Activated naive CD4-positive, alpha-beta T cell treated with anti-CD3 and anti-CD28 coated beads for 36 hours (primary cell): ENCODE measurements at regions of chr3 and their contacts with region 1.

Region 1: DNA sequence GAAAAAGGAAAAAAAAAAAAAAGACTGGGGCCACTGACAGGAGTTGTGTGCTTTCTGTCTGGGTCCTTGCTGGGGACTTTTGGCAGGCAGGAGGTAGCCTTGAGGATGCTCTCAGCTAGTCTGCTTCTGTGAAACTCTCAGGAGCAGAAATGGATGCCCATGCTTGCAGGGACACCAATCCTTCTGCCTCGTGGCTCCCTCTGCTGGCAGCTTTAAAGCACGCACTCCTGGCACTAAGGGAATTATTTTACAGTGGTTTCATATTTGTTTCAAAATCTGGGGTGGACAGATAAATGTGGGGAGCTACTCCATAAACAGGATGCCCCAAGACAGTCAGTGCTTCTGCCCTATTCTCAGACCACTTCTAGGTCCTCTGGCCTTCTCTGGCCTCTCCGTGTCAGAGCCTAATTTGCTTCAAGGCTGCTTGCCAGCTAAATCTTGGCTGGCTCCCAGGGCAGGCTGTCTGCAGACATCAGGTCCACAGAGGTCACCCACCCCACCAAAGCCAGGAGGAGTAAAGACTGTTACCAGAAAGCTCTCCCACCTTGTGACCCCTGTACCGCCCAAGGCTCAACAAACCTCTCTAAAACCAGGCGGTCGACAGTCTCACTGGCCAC is 17.1 kb downstream of the TRAIP start:
- DNase-seq: peak; percentile 89
- H3K4me3 Mint-ChIP-seq: no peak overlapping the region
- H3K27ac Mint-ChIP-seq: no peak overlapping the region
- H3K4me1 Mint-ChIP-seq: no peaks in the 10 kb centered on the region
- H3K27me3 Mint-ChIP-seq: no peaks in the 10 kb centered on the region

Region 2: GRCh38 chr3:49387721-49388120 is 451.6 kb before region 1 on chr3:
- CTCF ChIA-PET with region 1: no interaction called
- intact Hi-C with region 1: no loop called
- DNase-seq: no peak
- H3K4me3 Mint-ChIP-seq: no peak overlapping the region
- H3K27ac Mint-ChIP-seq: peak overlapping the region; percentile 50
- H3K4me1 Mint-ChIP-seq: peaks cover 50% of the 10 kb centered on the region
- H3K27me3 Mint-ChIP-seq: no peaks in the 10 kb centered on the region

Region 3: GRCh38 chr3:49703443-49703927 is 135.8 kb before region 1 on chr3:
- CTCF ChIA-PET with region 1: interaction called, 9 read pairs
- intact Hi-C with region 1: loop called (anchors 1 kb)
- DNase-seq: peak; percentile 78
- H3K4me3 Mint-ChIP-seq: no peak overlapping the region
- H3K27ac Mint-ChIP-seq: no peak overlapping the region
- H3K4me1 Mint-ChIP-seq: no peaks in the 10 kb centered on the region
- H3K27me3 Mint-ChIP-seq: no peaks in the 10 kb centered on the region

Region 4: DNA sequence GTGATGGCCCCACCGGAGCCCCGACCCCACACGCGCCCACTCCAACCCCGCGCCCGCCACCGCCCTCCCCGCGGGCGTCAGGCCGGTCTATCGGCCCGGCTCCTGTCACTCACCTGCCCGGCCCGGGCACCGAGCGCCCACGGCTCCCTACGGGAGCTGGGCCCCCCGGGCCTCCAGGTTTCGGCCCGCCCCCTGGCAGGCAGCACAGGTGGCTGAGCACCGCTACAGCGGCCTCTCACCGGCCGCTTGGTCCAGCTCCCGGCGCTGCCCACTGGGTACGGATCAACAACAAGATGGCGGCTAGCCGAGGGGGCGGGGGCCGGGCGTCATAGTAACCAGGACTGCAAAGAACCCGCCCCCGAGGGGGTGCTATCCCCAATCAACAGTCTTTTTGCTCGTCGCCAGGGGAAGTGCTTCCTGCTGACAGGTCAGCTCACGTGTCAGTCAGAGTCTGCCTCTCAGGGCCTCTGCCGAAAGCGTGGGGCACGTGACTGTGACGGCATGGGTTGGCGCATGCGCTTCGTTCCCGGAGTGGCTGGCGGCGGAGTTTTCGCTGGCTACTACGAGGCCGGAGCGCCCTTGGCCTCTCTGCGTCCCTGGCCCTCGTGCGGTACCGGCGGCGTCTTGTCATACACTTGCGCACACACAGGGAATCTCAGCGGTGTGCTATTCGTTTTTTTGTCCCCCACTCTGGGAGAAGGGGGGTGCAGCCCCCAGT is 52.9 kb before region 1 on chr3 and contains the start of gene IP6K1:
- CTCF ChIA-PET with region 1: interaction called, 17 read pairs
- intact Hi-C with region 1: no loop called
- DNase-seq: peak; percentile 100
- H3K4me3 Mint-ChIP-seq: peak within 1 kb of the TSS; percentile 83
- H3K27ac Mint-ChIP-seq: peak within 1 kb of the TSS; percentile 86
- H3K4me1 Mint-ChIP-seq: peaks cover 30% of the 10 kb centered on the region
- H3K27me3 Mint-ChIP-seq: no peaks in the 10 kb centered on the region
- total RNA-seq, gene IP6K1: 18.3 to 20.3 TPM

Region 5: DNA sequence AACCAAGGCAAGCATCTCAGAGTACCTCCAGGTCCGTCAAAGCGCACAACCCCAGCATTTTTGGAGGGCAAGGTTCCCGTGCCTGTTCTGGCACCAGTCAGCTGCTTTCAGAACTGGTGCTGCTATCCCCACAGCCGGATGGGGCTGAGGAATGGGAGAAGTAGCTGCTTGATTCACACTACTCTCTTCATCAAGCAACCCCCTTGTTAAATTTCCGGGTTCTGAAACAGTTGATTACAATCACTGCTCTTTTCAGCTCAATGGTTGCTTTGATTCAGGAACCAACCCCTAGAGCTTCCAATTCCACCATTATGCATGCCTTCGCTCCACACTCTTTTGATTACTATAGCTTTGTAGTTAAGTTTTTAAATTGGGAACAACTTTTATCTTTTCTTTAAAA is 13.3 kb before region 1 on chr3:
- CTCF ChIA-PET with region 1: interaction called, 13 read pairs
- intact Hi-C with region 1: no loop called
- DNase-seq: no peak
- H3K4me3 Mint-ChIP-seq: no peak overlapping the region
- H3K27ac Mint-ChIP-seq: no peak overlapping the region
- H3K4me1 Mint-ChIP-seq: no peaks in the 10 kb centered on the region
- H3K27me3 Mint-ChIP-seq: no peaks in the 10 kb centered on the region

Region 6: GRCh38 chr3:49906004-49906743 is 66.9 kb after region 1 on chr3:
- CTCF ChIA-PET with region 1: interaction called, 8 read pairs
- intact Hi-C with region 1: loop called (anchors 1 kb)
- DNase-seq: peak; percentile 54
- H3K4me3 Mint-ChIP-seq: no peak overlapping the region
- H3K27ac Mint-ChIP-seq: peak overlapping the region; percentile 65
- H3K4me1 Mint-ChIP-seq: peaks cover 27% of the 10 kb centered on the region
- H3K27me3 Mint-ChIP-seq: no peaks in the 10 kb centered on the region

Region 7: DNA sequence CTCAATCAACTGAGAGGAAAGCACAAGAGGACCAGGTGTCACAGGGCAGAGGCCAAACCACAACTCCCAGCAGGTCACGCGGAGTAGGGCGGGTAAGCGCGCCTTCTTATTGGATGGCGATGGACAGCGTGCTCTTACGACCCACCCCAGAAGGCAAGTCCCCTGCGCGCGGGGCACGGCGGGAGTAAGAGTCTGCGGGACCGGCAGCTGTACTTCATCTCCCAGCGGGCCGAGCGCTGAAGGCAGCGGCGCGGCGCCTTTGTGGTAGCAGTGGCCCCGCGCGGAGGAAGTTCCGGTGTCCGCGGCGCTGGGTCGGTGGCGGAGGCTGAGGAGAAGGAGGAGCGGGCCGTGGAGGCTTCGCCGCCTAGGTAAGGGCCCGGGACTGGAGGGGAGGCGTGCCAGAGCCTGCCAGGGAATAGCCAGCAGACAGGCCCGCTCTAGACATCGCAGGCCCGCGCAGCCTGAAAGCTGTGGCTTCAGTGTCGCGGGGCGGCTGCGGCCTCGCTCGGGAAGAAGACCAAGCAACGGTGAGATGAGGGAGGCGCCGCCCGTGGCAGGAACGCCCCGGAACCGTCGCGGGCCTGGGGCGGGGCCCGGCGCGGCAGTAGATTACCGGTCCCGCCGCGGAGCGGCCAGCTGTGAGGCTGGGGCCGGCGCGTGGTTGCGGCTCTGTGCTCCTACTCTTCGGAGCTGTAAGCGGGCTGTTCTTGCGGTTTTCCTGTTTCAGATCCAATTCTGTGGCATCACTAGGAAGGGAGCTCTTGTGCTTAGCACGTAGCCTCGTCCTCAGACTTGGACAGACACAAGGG is 100.8 kb after region 1 on chr3 and contains the start of gene RBM6:
- CTCF ChIA-PET with region 1: no interaction called
- intact Hi-C with region 1: no loop called
- DNase-seq: peak; percentile 98
- H3K4me3 Mint-ChIP-seq: peak within 1 kb of the TSS; percentile 98
- H3K27ac Mint-ChIP-seq: peak within 1 kb of the TSS; percentile 93
- H3K4me1 Mint-ChIP-seq: peaks cover 29% of the 10 kb centered on the region
- H3K27me3 Mint-ChIP-seq: no peaks in the 10 kb centered on the region
- total RNA-seq, gene RBM6: 89.1 to 98.2 TPM

Region 8: GRCh38 chr3:50028336-50028735 is 189.0 kb after region 1 on chr3:
- CTCF ChIA-PET with region 1: no interaction called
- intact Hi-C with region 1: no loop called
- DNase-seq: no peak
- H3K4me3 Mint-ChIP-seq: no peak overlapping the region
- H3K27ac Mint-ChIP-seq: no peak overlapping the region
- H3K4me1 Mint-ChIP-seq: no peaks in the 10 kb centered on the region
- H3K27me3 Mint-ChIP-seq: no peaks in the 10 kb centered on the region

Region 9: GRCh38 chr3:51371943-51372557 is 1532.7 kb after region 1 on chr3:
- CTCF ChIA-PET with region 1: no interaction called
- intact Hi-C with region 1: no loop called
- DNase-seq: peak; percentile 78
- H3K4me3 Mint-ChIP-seq: no peak overlapping the region
- H3K27ac Mint-ChIP-seq: no peak overlapping the region
- H3K4me1 Mint-ChIP-seq: peaks cover 2% of the 10 kb centered on the region
- H3K27me3 Mint-ChIP-seq: no peaks in the 10 kb centered on the region